Stomach (tissue), 19 donors: ENCODE measurements at regions of chr16 and their contacts with region 1.

Region 1: GRCh38 chr16:16033208-16033717 is 83.8 kb downstream of the ABCC1 start:
- DNase-seq: no peak
- H3K4me3 ChIP-seq: no peak overlapping the region
- H3K27ac ChIP-seq: peak overlapping the region in 4 of 5 donors; percentile 16 to 87 (median 36)
- H3K4me1 ChIP-seq: peaks cover 26 to 44% (median 36%) of the 10 kb centered on the region in 4 donors
- H3K27me3 ChIP-seq: no peaks in the 10 kb centered on the region
- CTCF ChIP-seq: no peak
- EP300 ChIP-seq: no peak
- POLR2A ChIP-seq: no peak

Region 2: GRCh38 chr16:15919331-15919730 is 113.9 kb before region 1 on chr16:
- intact Hi-C with region 1: no loop called
- DNase-seq: no peak
- H3K4me3 ChIP-seq: no peak overlapping the region
- H3K27ac ChIP-seq: no peak overlapping the region
- H3K4me1 ChIP-seq: no peaks in the 10 kb centered on the region
- H3K27me3 ChIP-seq: no peaks in the 10 kb centered on the region
- CTCF ChIP-seq: no peak
- EP300 ChIP-seq: no peak
- POLR2A ChIP-seq: no peak

Region 3: GRCh38 chr16:15961060-15961511 is 72.2 kb before region 1 on chr16:
- intact Hi-C with region 1: loop called (anchors 10 kb)
- DNase-seq: peak in 1 of 2 donors; percentile 64
- H3K4me3 ChIP-seq: no peak overlapping the region
- H3K27ac ChIP-seq: peak overlapping the region; percentile 11 to 45 (median 28)
- H3K4me1 ChIP-seq: peaks cover 5 to 91% (median 38%) of the 10 kb centered on the region in 4 donors
- H3K27me3 ChIP-seq: no peaks in the 10 kb centered on the region
- CTCF ChIP-seq: no peak
- EP300 ChIP-seq: no peak
- POLR2A ChIP-seq: no peak

Region 4: DNA sequence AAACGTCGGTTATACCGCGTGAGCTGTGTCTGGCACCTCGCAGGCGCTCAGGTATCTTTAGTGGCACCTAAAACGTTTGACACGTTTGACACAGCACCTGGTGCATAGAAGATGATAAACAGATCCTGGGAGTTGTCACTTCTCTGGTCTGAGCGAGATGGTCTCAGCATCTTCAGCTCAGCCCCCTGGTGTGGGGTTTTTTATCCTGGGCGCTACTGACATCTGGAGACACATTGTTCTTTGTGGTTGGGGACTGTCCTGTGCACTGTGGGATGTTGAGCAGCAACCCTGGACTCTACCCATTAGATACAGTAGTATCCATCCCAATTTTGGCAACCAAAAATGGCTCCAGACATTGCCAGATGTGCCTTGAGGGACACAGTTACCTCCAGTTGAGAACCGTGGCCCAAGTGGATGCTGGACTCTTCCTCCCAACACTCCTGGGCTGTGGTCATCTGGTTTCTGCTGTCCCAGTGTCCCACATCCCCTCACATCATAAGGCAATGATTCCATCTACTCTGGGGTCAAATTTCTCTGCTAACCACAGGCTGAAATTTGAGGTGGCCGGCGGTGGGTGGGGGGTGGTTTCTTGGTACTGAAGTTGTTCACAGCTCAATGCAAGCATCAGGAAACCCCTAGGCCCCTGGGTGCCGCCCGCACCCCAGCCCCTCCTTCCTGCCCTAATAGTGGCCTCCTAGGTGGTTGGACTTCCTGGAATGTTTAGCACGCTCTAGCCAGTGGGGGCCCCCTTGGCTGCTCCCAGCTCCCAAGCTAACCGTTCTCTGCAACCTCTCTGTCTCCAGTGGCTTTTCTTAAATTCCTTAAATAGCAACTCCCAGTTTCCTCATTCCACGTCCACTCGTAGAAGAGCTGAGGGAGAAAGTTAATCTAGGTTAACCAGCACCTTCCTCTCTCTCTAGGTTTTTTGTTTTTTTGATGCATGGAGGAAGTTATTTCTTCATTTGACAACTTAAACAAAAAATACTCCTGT is 40.9 kb after region 1 on chr16:
- intact Hi-C with region 1: no loop called
- DNase-seq: peak; percentile 34 to 71
- H3K4me3 ChIP-seq: no peak overlapping the region
- H3K27ac ChIP-seq: peak overlapping the region in 4 of 5 donors; percentile 47 to 80 (median 68)
- H3K4me1 ChIP-seq: peaks cover 27 to 76% (median 45%) of the 10 kb centered on the region in 4 donors
- H3K27me3 ChIP-seq: no peaks in the 10 kb centered on the region
- CTCF ChIP-seq: no peak
- EP300 ChIP-seq: no peak
- POLR2A ChIP-seq: no peak

Region 5: DNA sequence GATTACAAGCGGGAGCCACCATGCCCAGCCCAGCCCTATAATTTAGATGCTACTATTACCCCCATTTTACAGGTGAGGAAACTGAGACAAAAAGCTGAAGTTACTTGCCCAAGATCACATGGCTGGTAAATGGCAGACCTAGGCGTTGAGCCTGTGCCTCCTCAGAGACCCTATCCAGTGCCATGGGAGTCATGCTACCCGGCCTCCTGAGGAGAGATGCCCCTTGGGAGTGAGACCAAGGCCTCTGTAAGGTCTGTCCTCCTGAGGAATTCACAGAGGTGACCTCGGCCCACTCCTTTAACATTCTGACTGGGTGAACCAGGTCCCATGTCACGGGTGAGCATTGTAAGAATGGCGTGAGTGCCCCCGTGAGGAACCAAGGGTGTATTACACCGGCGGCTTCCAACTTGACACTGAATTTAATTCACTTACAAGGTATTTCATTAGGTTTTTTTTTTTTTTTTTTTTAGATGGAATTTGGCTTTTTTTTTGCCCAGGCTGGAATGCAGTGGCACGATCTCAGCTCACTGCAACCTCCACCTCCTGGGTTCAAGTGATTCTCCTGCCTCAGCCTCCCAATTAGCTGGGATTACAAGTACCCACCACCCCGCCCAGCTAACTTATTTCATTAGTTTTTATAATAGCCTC is 94.3 kb after region 1 on chr16:
- intact Hi-C with region 1: loop called (anchors 10 kb)
- DNase-seq: peak; percentile 74 to 86
- H3K4me3 ChIP-seq: no peak overlapping the region
- H3K27ac ChIP-seq: peak overlapping the region in 4 of 5 donors; percentile 2 to 74 (median 39)
- H3K4me1 ChIP-seq: peaks cover 0 to 5% (median 0%) of the 10 kb centered on the region in 4 donors
- H3K27me3 ChIP-seq: no peaks in the 10 kb centered on the region
- CTCF ChIP-seq: peak in 5 of 7 experiments; percentile 85 to 95 (median 91)
- EP300 ChIP-seq: no peak
- POLR2A ChIP-seq: no peak